ENCODE measurements at regions of chr1 and their contacts with region 1.

Region 1: GRCh38 chr1:36149237-36149972 is at the start of gene TRAPPC3:
- DNase-seq: peak; percentile 100
- H3K4me3 ChIP-seq: peak within 1 kb of the TSS; percentile 59 to 96 (median 76)
- H3K27ac ChIP-seq: peak within 1 kb of the TSS; percentile 74 to 97 (median 96)
- H3K4me1 ChIP-seq: peaks cover 27 to 45% of the 10 kb centered on the region in 2 donors
- H3K27me3 ChIP-seq: no peaks in the 10 kb centered on the region
- CTCF ChIP-seq: peak; percentile 75 to 99 (median 98)
- POLR2A ChIP-seq: peak; percentile 63 to 77
- total RNA-seq, gene TRAPPC3: 74.6 to 182 (median 124) TPM

Region 2: GRCh38 chr1:36187800-36188593 is 38.6 kb after region 1 on chr1:
- intact Hi-C with region 1: loop called in 1 of 2 experiments (anchors 5 kb)
- DNase-seq: peak; percentile 84 to 96 (median 91)
- H3K4me3 ChIP-seq: no peak overlapping the region
- H3K27ac ChIP-seq: peak overlapping the region in 4 of 5 donors; percentile 33 to 83 (median 73)
- H3K4me1 ChIP-seq: peaks cover 6 to 10% of the 10 kb centered on the region in 2 donors
- H3K27me3 ChIP-seq: no peaks in the 10 kb centered on the region
- CTCF ChIP-seq: peak; percentile 83 to 99 (median 96)
- POLR2A ChIP-seq: peak in 1 of 2 donors; percentile 20

Region 3: DNA sequence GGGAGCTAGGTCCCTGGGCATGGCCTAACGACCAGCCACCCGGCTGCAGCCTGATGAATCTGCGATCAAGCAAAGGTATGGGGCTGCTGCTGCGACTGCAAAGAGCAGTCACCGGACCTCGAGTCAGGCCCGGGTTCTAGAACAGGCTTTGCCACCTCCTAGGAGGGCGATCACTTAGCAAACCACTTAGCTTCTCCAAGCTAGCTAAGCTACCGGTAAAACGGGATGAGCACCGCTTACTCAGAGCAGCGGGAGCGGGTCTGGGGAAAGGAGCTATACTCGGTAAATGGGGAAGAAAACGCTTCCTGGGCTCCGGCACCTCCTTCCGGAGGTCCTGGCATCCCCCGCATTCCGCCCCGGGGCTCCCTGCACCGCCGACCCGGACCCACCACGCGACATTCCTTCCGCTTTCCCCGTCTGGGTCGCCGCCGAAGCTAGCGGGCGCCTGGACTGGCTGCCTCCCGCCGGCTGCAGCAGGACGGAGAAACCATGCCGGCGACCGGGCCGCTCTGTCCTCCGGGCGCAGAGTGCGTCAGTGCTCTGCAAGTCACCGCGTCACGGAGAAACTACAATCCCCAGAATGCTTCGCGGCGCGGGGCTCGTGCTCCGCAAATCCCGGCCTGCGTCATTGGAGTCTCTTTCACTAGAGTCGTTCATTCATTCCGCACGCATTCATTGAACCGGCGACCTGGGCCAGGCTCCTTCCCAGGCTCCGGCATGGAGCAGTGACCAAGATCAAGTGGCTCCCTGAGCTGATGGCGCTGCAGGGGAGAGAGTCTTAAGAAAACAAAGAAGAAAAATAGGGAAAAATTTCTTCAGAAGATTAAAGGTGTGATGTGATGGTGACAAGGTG is 248.2 kb after region 1 on chr1 and contains the start of gene LSM10:
- intact Hi-C with region 1: loop called in 1 of 2 experiments (anchors 10 kb)
- DNase-seq: peak; percentile 91 to 98 (median 96)
- H3K4me3 ChIP-seq: peak within 1 kb of the TSS in 3 of 4 donors; percentile 62 to 72 (median 64)
- H3K27ac ChIP-seq: peak within 1 kb of the TSS; percentile 69 to 95 (median 84)
- H3K4me1 ChIP-seq: peaks cover 7 to 15% of the 10 kb centered on the region in 2 donors
- H3K27me3 ChIP-seq: no peaks in the 10 kb centered on the region
- CTCF ChIP-seq: no peak
- POLR2A ChIP-seq: peak; percentile 93 to 95
- total RNA-seq, gene LSM10: 13.2 to 42.1 (median 34.8) TPM

Measured in adrenal gland (tissue), 19 donors.